CD4-positive, alpha-beta memory T cell (primary cell): ENCODE measurements at regions of chr17 and their contacts with region 1.

Region 1: GRCh38 chr17:40113110-40113906 is 8.5 kb upstream of the MSL1 start:
- DNase-seq: peak; percentile 92 to 97 (median 93)
- H3K4me3 ChIP-seq: peak overlapping the region; percentile 47 to 64
- H3K4me3 Mint-ChIP-seq: peak overlapping the region; percentile 83 to 93 (median 86)
- H3K27ac ChIP-seq: peak overlapping the region; percentile 51
- H3K27ac Mint-ChIP-seq: peak overlapping the region; percentile 87 to 100 (median 95)
- H3K4me1 ChIP-seq: peaks cover 59% of the 10 kb centered on the region
- H3K4me1 Mint-ChIP-seq: peaks cover 40 to 60% (median 52%) of the 10 kb centered on the region in 4 donors
- H3K27me3 ChIP-seq: no peaks in the 10 kb centered on the region
- H3K27me3 Mint-ChIP-seq: no peaks in the 10 kb centered on the region

Region 2: GRCh38 chr17:40038882-40039513 is 74.3 kb before region 1 on chr17:
- CTCF ChIA-PET with region 1: interaction called, 24 read pairs
- POLR2A ChIA-PET with region 1: interaction called, 3 read pairs
- intact Hi-C with region 1: no loop called
- DNase-seq: no peak
- H3K4me3 ChIP-seq: no peak overlapping the region
- H3K4me3 Mint-ChIP-seq: no peak overlapping the region
- H3K27ac ChIP-seq: no peak overlapping the region
- H3K27ac Mint-ChIP-seq: peak overlapping the region in 2 of 7 donors; percentile 18 to 87
- H3K4me1 ChIP-seq: no peaks in the 10 kb centered on the region
- H3K4me1 Mint-ChIP-seq: peaks cover 0 to 6% (median 2%) of the 10 kb centered on the region in 4 donors
- H3K27me3 ChIP-seq: no peaks in the 10 kb centered on the region
- H3K27me3 Mint-ChIP-seq: no peaks in the 10 kb centered on the region

Region 3: GRCh38 chr17:40075201-40075941 is 37.9 kb before region 1 on chr17:
- CTCF ChIA-PET with region 1: interaction called, 543 read pairs
- POLR2A ChIA-PET with region 1: interaction called, 178 read pairs
- intact Hi-C with region 1: loop called (anchors 1 kb)
- DNase-seq: peak; percentile 59 to 71 (median 63)
- H3K4me3 ChIP-seq: no peak overlapping the region
- H3K4me3 Mint-ChIP-seq: peak overlapping the region in 7 of 8 donors; percentile 17 to 80 (median 35)
- H3K27ac ChIP-seq: peak overlapping the region; percentile 8
- H3K27ac Mint-ChIP-seq: peak overlapping the region; percentile 60 to 93 (median 77)
- H3K4me1 ChIP-seq: peaks cover 38% of the 10 kb centered on the region
- H3K4me1 Mint-ChIP-seq: peaks cover 20 to 45% (median 33%) of the 10 kb centered on the region in 4 donors
- H3K27me3 ChIP-seq: no peaks in the 10 kb centered on the region
- H3K27me3 Mint-ChIP-seq: no peaks in the 10 kb centered on the region

Region 4: DNA sequence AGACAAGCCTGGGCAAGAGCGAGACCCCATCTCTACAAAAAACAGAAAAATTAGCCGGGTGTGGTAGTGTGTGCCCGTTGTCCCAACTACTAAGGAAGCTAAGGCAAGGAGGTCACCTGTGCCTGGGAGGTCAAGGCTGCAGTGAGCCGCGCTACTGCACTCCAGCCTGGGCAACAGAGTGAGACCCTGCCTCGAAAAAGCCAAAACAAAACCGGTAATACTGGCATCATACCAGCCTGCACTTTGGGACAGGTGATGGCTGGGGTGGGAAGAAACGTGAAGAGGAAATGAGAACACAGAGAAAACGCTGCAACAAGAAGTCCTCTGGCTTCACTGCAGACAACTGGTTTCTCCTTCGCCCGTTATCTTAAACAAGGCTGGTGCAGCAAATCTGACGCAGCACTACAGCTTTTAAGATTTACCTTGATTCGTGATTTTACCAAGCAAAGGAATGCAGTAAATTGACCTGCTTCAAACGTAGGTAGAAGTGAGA is 26.3 kb after region 1 on chr17:
- CTCF ChIA-PET with region 1: interaction called, 51 read pairs
- POLR2A ChIA-PET with region 1: interaction called, 178 read pairs
- intact Hi-C with region 1: loop called (anchors 1 kb)
- DNase-seq: no peak
- H3K4me3 ChIP-seq: peak overlapping the region; percentile 25 to 62
- H3K4me3 Mint-ChIP-seq: peak overlapping the region; percentile 91 to 98 (median 96)
- H3K27ac ChIP-seq: peak overlapping the region; percentile 97
- H3K27ac Mint-ChIP-seq: peak overlapping the region; percentile 98 to 100 (median 99)
- H3K4me1 ChIP-seq: peaks cover 28% of the 10 kb centered on the region
- H3K4me1 Mint-ChIP-seq: peaks cover 23 to 49% (median 31%) of the 10 kb centered on the region in 4 donors
- H3K27me3 ChIP-seq: no peaks in the 10 kb centered on the region
- H3K27me3 Mint-ChIP-seq: no peaks in the 10 kb centered on the region

Region 5: GRCh38 chr17:40168262-40168832 is 55.0 kb after region 1 on chr17:
- CTCF ChIA-PET with region 1: interaction called, 287 read pairs
- POLR2A ChIA-PET with region 1: interaction called, 68 read pairs
- intact Hi-C with region 1: loop called (anchors 1 kb)
- DNase-seq: peak in 4 of 5 donors; percentile 62 to 68 (median 64)
- H3K4me3 ChIP-seq: no peak overlapping the region
- H3K4me3 Mint-ChIP-seq: no peak overlapping the region
- H3K27ac ChIP-seq: no peak overlapping the region
- H3K27ac Mint-ChIP-seq: peak overlapping the region; percentile 57 to 94 (median 89)
- H3K4me1 ChIP-seq: no peaks in the 10 kb centered on the region
- H3K4me1 Mint-ChIP-seq: peaks cover 4 to 15% (median 6%) of the 10 kb centered on the region in 4 donors
- H3K27me3 ChIP-seq: no peaks in the 10 kb centered on the region
- H3K27me3 Mint-ChIP-seq: no peaks in the 10 kb centered on the region

Region 6: DNA sequence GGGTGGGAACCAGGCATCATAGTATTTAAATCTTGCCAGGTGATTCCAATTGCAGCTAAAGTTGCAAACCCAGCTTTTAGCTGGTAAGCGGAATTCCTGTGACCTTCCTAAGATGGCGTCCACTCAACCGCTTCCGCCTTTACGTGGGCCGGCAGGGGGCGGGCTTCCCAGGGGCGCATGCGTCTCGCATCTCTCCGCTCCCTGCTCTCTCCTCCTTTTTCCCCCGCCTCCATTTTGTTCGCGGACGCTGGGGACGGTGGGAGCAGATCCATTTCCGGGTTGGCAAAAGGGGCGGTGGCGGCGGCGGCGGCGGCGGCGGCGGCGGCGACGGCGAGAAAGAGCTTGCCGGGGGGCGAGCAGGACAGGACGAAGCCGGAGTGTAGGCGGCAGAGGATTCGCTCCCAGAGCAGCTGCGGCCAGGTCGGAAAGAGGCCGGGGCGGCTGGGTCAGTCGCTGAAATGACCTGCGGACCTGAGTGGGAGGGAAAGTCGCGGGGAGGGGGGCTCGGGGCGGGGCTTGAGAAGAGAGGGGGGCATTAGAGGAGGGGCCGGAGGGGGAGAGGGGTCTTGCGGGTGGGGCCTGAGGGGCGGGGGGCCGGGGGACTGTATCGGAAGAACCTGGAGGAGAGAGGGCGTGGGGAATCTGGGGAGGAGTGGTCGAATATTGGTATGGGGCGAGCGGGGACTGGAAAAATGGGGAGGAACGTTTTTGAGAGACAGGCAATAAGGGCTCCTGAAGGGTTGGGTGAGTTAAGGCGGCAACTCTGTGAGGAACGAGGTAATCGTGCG is 106.0 kb after region 1 on chr17 and contains the start of gene WIPF2:
- CTCF ChIA-PET with region 1: interaction called, 11 read pairs
- POLR2A ChIA-PET with region 1: interaction called, 11 read pairs
- intact Hi-C with region 1: no loop called
- DNase-seq: peak; percentile 94 to 97 (median 95)
- H3K4me3 ChIP-seq: peak within 1 kb of the TSS; percentile 59 to 71
- H3K4me3 Mint-ChIP-seq: peak within 1 kb of the TSS; percentile 92 to 100 (median 98)
- H3K27ac ChIP-seq: peak within 1 kb of the TSS; percentile 96
- H3K27ac Mint-ChIP-seq: peak within 1 kb of the TSS; percentile 93 to 100 (median 100)
- H3K4me1 ChIP-seq: peaks cover 26% of the 10 kb centered on the region
- H3K4me1 Mint-ChIP-seq: peaks cover 23 to 49% (median 33%) of the 10 kb centered on the region in 4 donors
- H3K27me3 ChIP-seq: no peaks in the 10 kb centered on the region
- H3K27me3 Mint-ChIP-seq: no peaks in the 10 kb centered on the region
- total RNA-seq, gene WIPF2: 34.4 to 34.7 TPM